ENCODE measurements at regions of chr18 and their contacts with region 1.

Region 1: GRCh38 chr18:50507120-50507590 is 52.7 kb upstream of the MAPK4 start:
- DNase-seq: peak; percentile 16 to 49 (median 30)
- ATAC-seq: peak; percentile 87
- H3K4me3 ChIP-seq: no peak overlapping the region
- H3K27ac ChIP-seq: no peak overlapping the region
- H3K4me1 ChIP-seq: no peaks in the 10 kb centered on the region
- H3K27me3 ChIP-seq: no peaks in the 10 kb centered on the region
- CTCF ChIP-seq: peak; percentile 60 to 65 (median 61)
- EP300 ChIP-seq: no peak
- POLR2A ChIP-seq: no peak
- RAD21 ChIP-seq: peak; percentile 53 to 68

Region 2: DNA sequence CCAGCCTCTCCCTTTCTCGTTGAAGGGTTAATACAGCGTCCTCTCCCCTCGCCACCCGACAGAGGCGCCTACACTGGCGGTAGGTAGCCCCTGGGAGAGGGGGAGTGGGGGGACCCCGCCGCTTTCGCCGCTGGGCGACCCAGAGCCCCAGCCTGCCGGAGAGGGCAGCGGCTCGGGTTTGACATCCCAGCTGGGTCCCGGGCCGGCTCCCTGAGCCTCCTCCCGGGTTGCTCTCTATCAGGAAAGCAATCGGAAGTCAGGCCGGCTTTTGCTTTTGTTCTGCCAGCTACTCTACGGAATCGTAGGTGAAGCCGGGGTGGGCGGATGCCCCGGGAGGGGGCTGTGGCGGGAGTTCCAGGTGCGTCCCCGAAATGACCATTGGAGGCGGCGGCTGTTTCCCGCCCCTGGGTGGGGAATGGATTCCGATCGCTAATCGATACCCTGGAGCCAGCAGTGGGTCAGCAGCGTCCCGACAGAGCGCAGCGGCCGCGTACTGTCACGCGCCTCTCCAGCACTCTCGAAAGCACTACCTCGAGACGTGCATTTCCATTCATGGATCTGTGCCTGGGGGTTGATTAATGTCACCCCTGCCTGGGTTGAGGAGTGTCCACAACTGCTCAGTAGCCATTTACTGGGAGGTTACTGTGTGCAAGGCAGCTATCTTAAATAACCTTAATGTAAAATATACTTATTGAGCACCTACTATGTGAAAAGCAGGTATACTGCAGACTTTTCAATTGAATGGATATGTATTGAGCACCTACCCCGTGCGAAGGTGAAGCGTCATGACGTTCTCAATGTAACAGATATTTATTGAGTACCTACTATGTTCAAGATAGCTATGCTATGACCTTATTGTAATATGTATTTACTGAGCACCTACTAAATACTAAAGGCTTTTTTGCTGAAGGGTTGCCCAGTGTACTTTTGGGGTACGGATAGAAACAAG is 53.8 kb after region 1 on chr18:
- CTCF ChIA-PET with region 1: no interaction called
- POLR2A ChIA-PET with region 1: no interaction called
- in situ Hi-C with region 1: no loop called
- intact Hi-C with region 1: no loop called
- DNase-seq: no peak
- ATAC-seq: no peak
- H3K4me3 ChIP-seq: no peak overlapping the region
- H3K27ac ChIP-seq: no peak overlapping the region
- H3K4me1 ChIP-seq: peaks cover 0 to 14% of the 10 kb centered on the region in 2 experiments; a peak in 2 of 5 replicates
- H3K27me3 ChIP-seq: peaks cover 0 to 15% of the 10 kb centered on the region in 2 experiments; a peak in 4 of 5 replicates
- CTCF ChIP-seq: no peak
- EP300 ChIP-seq: no peak
- POLR2A ChIP-seq: no peak
- RAD21 ChIP-seq: no peak

Region 3: DNA sequence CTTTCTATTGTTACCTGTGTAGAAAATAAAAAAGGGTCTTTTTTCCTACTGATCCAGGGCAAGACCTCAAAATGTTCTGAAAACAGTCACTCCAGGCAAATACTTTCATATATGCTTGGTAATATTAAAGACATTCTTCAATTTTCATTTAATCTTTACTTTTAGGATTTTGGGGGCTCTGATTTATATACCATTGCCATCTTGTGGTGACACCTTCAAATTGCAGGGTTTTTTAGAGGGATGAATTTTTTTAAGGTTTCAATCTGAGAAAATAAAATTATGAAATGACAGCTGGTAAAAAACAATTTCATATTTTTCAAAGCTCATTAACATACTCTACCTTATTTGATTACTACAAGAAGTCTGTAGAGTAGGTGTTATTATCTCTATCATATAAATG is 79.6 kb after region 1 on chr18:
- CTCF ChIA-PET with region 1: no interaction called
- POLR2A ChIA-PET with region 1: no interaction called
- in situ Hi-C with region 1: no loop called
- intact Hi-C with region 1: loop called (anchors 1 kb)
- DNase-seq: peak in 3 of 4 experiments; percentile 10 to 15 (median 13)
- ATAC-seq: no peak
- H3K4me3 ChIP-seq: no peak overlapping the region
- H3K27ac ChIP-seq: no peak overlapping the region
- H3K4me1 ChIP-seq: no peaks in the 10 kb centered on the region
- H3K27me3 ChIP-seq: no peaks in the 10 kb centered on the region
- CTCF ChIP-seq: peak in 2 of 3 experiments; percentile 9 to 49; a peak in 3 of 6 replicates
- EP300 ChIP-seq: no peak
- POLR2A ChIP-seq: no peak
- RAD21 ChIP-seq: peak in 1 of 2 experiments; percentile 48; a peak in 2 of 4 replicates

Region 4: DNA sequence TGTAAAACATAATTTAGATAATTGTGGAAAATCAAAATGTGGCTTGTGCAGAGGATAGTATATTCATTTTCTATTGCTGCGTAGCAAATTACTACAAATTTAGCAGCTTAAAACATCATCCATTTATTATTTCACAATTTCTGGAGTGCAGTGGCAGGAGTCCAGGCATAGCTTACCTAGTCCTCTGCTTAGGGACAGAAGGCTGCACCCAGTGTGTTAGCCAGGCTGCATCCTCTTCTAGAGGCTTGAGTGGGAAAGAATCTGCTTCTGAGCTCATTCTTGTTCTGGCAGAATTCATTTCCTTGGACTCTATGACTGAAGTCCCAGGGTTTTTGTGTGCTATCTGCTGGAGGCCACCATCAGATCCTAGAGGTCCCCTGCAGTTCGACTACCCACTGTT is 273.0 kb after region 1 on chr18:
- CTCF ChIA-PET with region 1: no interaction called
- POLR2A ChIA-PET with region 1: no interaction called
- in situ Hi-C with region 1: no loop called
- intact Hi-C with region 1: loop called (anchors 5 kb)
- DNase-seq: no peak
- ATAC-seq: no peak
- H3K4me3 ChIP-seq: no peak overlapping the region
- H3K27ac ChIP-seq: no peak overlapping the region
- H3K4me1 ChIP-seq: no peaks in the 10 kb centered on the region
- H3K27me3 ChIP-seq: peaks cover 0 to 2% of the 10 kb centered on the region in 2 experiments; a peak in 1 of 5 replicates
- CTCF ChIP-seq: no peak
- EP300 ChIP-seq: no peak
- POLR2A ChIP-seq: no peak
- RAD21 ChIP-seq: no peak

Region 5: GRCh38 chr18:50791599-50792438 is 284.7 kb after region 1 on chr18:
- CTCF ChIA-PET with region 1: no interaction called
- POLR2A ChIA-PET with region 1: no interaction called
- in situ Hi-C with region 1: no loop called
- intact Hi-C with region 1: no loop called
- DNase-seq: no peak
- ATAC-seq: peak; percentile 53; the same call in 1 of the 3 replicates
- H3K4me3 ChIP-seq: no peak overlapping the region
- H3K27ac ChIP-seq: no peak overlapping the region
- H3K4me1 ChIP-seq: no peaks in the 10 kb centered on the region
- H3K27me3 ChIP-seq: peaks cover 5 to 8% of the 10 kb centered on the region in 2 experiments; a peak in 2 of 5 replicates
- CTCF ChIP-seq: no peak
- EP300 ChIP-seq: no peak
- POLR2A ChIP-seq: no peak
- RAD21 ChIP-seq: no peak

Region 6: DNA sequence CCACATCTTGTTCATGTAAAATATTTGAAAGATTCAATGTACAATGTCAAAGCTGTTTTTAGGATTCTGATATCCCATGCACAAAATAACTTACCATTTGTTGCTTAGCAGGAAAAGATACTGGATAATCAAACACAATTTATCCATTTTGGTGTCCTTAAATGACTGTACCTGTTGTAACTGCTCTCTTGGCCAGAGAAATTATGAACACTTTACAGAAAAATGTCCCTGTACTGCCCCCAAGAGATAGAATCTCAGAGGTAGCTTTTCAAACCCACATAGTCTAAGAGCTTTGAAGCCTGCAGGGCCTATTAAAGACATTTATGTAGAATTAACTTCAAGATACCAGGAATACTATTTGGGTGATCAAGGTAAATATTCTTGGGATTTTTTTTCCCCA is 359.6 kb after region 1 on chr18:
- CTCF ChIA-PET with region 1: no interaction called
- POLR2A ChIA-PET with region 1: no interaction called
- in situ Hi-C with region 1: no loop called
- intact Hi-C with region 1: loop called (anchors 5 kb)
- DNase-seq: no peak
- ATAC-seq: peak; percentile 79
- H3K4me3 ChIP-seq: no peak overlapping the region
- H3K27ac ChIP-seq: no peak overlapping the region
- H3K4me1 ChIP-seq: peaks cover 0 to 4% of the 10 kb centered on the region in 2 experiments; a peak in 1 of 5 replicates
- H3K27me3 ChIP-seq: no peaks in the 10 kb centered on the region; a peak in 1 of 5 replicates
- CTCF ChIP-seq: peak in 2 of 3 experiments; percentile 6 to 38; a peak in 3 of 6 replicates
- EP300 ChIP-seq: no peak
- POLR2A ChIP-seq: no peak
- RAD21 ChIP-seq: peak; percentile 37 to 65; a peak in 3 of 4 replicates

Measured in K562 (cell line).